Aorta (tissue), 5 donors: ENCODE measurements at regions of chr11 and their contacts with region 1.

Region 1: DNA sequence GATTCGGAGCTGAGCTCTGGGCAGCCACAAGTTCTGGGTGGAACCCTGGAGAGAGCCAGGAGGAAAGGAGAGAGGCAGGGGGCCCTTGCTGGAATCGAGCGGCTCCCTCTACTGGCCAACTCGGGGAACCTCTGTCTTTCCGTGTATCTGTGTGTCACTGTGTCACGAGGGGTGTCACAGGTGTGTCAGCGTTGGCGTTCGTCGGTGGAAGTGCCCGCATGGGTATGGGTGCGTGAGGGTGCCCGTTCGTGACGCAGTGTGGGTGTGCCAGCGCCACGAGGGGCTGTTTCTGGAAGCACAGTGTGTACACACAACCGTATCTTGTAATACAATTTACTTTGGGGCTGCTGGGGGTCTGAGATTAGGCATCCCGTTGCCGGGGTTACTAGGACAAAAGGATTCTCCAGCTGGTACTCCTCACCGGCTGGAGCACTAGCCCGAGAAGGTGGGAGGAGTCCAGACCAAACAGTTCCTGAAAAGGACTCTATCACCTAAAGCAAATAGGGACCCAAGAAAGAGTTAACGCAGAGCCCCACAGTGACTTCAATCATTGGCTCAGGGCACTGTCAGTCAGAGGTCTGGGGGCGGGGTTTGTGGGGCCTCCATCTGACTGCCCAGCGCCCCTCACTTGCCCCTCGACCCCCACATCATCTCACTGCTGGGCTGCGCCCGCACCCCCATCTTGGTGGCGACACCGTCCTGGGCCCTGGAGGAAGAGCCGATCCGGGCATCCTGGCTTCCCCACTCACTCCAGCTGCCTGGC is 2.6 kb upstream of the BCL9L start:
- DNase-seq: peak; percentile 94 to 95
- ATAC-seq: peak; percentile 89
- H3K4me3 ChIP-seq: peak overlapping the region; percentile 67 to 80
- H3K27ac ChIP-seq: peak overlapping the region; percentile 81 to 89
- H3K4me1 ChIP-seq: no peaks in the 10 kb centered on the region
- H3K27me3 ChIP-seq: no peaks in the 10 kb centered on the region

Region 2: DNA sequence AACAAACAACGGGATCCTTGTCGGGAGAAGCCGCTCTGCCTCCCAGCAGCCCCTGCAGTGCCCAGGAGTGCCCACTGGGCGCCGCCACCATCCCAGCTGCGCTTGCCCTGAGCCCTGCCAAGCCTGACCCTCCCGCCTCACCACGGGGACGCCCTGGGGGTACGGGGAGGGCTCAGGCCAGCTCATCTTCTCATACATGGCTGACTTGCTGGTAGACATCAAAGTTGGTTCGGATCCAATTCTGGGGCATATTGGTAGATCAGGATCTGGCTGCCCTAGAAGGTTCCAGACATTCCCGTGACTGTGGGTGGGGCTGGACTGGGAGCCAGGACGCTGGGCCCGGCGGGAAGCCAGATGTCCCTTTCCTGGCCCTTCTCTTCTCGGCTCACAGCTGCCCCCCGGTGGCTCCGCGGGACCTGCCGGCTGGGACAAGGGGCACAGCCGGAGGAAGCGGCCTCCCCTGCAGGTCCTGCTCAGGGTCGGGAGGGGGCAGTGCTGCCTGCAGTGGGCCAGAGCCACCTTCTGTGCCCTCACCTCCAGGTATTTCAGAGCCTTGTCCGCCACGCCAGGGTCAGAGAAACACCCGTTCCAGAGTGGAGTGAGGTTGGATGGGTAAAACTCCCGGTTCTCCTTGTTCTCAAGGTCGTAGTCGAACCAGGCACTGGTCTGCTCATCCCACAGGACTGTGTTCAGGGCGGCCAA is 238.3 kb before region 1 on chr11:
- intact Hi-C with region 1: loop called in 1 of 2 experiments (anchors 1 kb)
- DNase-seq: peak; percentile 95 to 97
- ATAC-seq: peak; percentile 97
- H3K4me3 ChIP-seq: no peak overlapping the region
- H3K27ac ChIP-seq: peak overlapping the region in 1 of 2 donors; percentile 27
- H3K4me1 ChIP-seq: no peaks in the 10 kb centered on the region
- H3K27me3 ChIP-seq: no peaks in the 10 kb centered on the region

Region 3: DNA sequence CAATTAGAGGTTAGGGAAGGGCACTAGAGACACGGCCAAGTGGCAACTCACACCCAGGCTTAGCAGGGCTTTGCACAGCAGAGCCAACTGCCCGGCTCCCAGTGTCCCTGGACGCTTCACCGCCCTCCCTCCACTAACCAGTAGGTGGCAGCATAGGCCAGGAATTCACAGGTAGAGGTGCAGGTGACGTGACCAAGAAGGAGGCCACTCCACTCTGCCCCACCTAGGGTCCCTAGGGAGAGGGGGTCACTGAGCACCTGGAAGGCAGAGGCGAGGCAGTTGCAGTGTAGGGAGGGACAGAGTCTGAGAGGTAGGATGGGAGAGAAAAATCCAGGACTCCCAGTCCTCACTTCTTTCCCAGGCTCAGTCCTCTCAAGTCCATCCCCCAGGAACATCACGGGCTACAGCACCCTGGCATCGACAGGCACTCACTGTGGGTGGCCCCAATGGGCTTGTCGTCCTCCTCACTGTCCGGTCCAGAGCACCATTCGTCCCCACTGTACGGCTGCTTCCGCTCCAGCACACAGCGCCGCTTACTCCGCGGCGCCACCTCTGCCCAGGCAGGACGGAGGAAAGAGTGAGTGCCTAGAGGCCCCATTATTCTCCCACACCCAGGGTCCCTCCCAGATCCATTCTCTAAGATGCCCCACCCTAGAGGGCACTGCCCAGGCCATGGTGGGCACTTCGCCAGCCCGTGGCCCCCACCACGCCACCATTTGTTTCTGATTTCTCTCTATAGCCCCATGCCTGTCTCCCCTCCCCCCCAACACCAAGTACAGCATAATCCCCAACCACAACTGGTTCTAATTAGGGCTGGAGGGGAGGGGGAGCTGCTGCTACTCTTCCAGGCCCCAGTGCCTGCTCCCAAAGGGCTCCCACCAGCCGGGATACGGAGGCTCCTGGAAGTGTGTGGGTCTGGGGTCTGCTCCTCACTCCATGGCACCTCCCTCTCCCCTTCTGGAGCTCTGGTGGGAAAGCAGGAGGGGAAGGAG is 20.9 kb before region 1 on chr11:
- intact Hi-C with region 1: loop called (anchors 1 kb)
- DNase-seq: peak; percentile 85 to 93
- ATAC-seq: peak; percentile 66
- H3K4me3 ChIP-seq: no peak overlapping the region
- H3K27ac ChIP-seq: peak overlapping the region in 1 of 2 donors; percentile 11
- H3K4me1 ChIP-seq: no peaks in the 10 kb centered on the region
- H3K27me3 ChIP-seq: no peaks in the 10 kb centered on the region